Activated CD8-positive, alpha-beta T cell treated with anti-CD3 and anti-CD28 coated beads, Interleukin-2, amount 10 ng/mL, durations not matched to agents 7 days and 5 days (primary cell): ENCODE measurements at regions of chr2 and their contacts with region 1.

Region 1: GRCh38 chr2:42652086-42652485 is 83.7 kb downstream of the MTA3 start:
- DNase-seq: peak; percentile 68
- ATAC-seq: peak; percentile 66
- H3K4me3 Mint-ChIP-seq: peak overlapping the region; percentile 65
- H3K27ac Mint-ChIP-seq: peak overlapping the region; percentile 89
- H3K4me1 Mint-ChIP-seq: peaks cover 43% of the 10 kb centered on the region
- H3K27me3 Mint-ChIP-seq: no peaks in the 10 kb centered on the region

Region 2: GRCh38 chr2:42639340-42640077 is 12.6 kb before region 1 on chr2:
- CTCF ChIA-PET with region 1: interaction called, 12 read pairs
- POLR2A ChIA-PET with region 1: no interaction called
- DNase-seq: no peak
- ATAC-seq: no peak
- H3K4me3 Mint-ChIP-seq: peak overlapping the region; percentile 45
- H3K27ac Mint-ChIP-seq: no peak overlapping the region
- H3K4me1 Mint-ChIP-seq: peaks cover 16% of the 10 kb centered on the region
- H3K27me3 Mint-ChIP-seq: no peaks in the 10 kb centered on the region